GM10248 (cell line): ENCODE measurements at regions of chr4 and their contacts with region 1.

Region 1: GRCh38 chr4:38539501-38539900 is 124.5 kb upstream of the KLF3 start:
- DNase-seq: no peak
- CTCF ChIP-seq: no peak

Region 2: DNA sequence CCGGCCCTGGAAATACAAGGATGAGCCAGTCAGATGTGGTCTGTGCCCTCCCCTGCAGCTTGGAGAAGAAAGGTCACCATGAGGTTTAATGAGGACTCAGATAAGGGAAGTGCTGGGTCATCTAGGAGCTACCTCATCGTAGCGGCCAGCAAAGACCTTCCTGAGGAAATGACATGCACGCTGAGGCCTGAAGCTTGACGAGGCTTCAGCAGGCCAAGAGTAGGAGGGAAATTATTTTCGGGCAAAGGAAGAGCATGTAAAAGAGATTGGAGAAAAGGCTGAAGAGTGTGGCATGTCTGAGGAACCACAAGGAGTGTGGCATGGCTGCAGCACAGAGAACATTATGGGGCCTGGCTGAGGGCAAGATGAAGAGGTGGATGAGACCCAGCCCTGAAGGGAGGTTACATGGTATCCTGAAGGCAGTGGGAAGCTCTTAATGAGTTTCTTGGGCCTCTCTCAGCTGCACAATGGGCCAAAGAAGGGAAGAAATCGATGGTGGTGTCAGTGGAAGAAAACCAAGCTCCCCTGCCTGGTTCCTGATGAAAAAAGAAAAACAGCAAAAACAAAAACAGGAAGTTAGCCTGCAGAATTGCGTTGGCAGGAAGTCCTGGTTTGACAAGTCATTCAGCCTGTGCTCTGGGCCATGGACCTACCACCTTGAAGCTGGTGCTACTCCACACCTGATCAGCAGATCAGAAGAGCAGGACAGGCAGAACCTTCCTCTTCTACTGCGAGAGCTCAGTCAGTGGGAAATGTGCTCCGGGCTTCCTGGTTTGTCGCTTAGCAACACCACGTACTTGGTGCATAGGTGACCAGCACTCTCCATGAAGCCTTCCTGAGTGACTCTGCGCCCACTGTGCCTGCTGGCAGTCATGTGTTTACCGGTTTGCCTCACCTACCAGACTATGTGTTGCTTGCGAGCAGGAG is 10.0 kb before region 1 on chr4:
- CTCF ChIA-PET with region 1: interaction called, 10 read pairs
- POLR2A ChIA-PET with region 1: no interaction called
- DNase-seq: peak; percentile 57
- CTCF ChIP-seq: no peak